ENCODE measurements at regions of chr15 and their contacts with region 1.

Region 1: DNA sequence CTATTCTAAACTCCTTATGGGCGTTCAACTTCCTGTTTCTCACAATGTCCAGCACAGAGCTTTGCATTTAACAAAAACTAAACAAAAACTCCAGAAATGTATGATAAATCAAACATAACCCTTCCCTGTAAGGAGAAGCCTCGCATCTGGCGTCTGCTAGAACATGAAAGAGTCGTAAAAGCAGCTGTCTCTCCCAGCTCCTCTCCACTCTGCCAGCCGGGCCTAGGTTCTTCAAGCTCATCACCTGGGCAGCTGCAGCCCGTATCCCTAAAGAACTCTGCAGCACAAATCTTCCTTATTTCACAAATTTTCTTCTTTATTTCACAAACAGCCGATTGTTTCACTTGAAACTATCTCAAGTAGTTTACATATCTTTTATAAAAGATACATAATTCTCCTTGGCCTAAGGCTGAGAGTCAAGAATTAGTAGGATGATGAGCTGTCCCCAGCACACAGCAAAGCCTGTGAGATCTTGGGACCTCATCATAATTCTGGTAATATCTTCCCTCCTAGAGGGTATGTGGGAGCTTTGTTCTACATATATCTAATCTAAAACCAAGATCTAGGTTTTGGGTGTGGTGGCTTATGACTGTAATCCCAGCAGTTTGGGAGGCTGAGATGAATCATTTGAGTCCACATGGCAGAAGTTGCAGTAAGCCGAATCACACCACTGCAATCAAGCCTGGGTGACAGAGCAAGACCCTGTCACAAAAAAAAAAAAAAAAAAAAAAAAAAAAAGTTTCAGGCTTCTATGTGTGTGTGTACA is 35.3 kb downstream of the ANXA2 start:
- DNase-seq: no peak
- H3K4me3 ChIP-seq: no peak overlapping the region
- H3K27ac ChIP-seq: no peak overlapping the region
- H3K4me1 ChIP-seq: no peaks in the 10 kb centered on the region
- H3K27me3 ChIP-seq: peaks cover 0 to 1% (median 0%) of the 10 kb centered on the region in 4 experiments; a peak in 1 of 7 replicates
- CTCF ChIP-seq: no peak
- EP300 ChIP-seq: no peak
- POLR2A ChIP-seq: no peak
- RAD21 ChIP-seq: no peak

Region 2: GRCh38 chr15:60340207-60340921 is 22.1 kb before region 1 on chr15:
- CTCF ChIA-PET with region 1: interaction called, 18 read pairs
- POLR2A ChIA-PET with region 1: no interaction called
- DNase-seq: no peak
- H3K4me3 ChIP-seq: no peak overlapping the region
- H3K27ac ChIP-seq: no peak overlapping the region
- H3K4me1 ChIP-seq: peaks cover 3 to 7% (median 4%) of the 10 kb centered on the region in 4 experiments; a peak in 6 of 7 replicates
- H3K27me3 ChIP-seq: no peaks in the 10 kb centered on the region
- CTCF ChIP-seq: peak; percentile 20 to 35 (median 31)
- EP300 ChIP-seq: no peak
- POLR2A ChIP-seq: no peak
- RAD21 ChIP-seq: peak; percentile 21 to 45; a peak in 3 of 4 replicates

Region 3: GRCh38 chr15:60374628-60375081 is 12.2 kb after region 1 on chr15:
- CTCF ChIA-PET with region 1: interaction called, 38 read pairs
- POLR2A ChIA-PET with region 1: interaction called, 4 read pairs
- DNase-seq: no peak
- H3K4me3 ChIP-seq: no peak overlapping the region
- H3K27ac ChIP-seq: no peak overlapping the region; the same call in 1 of the 2 replicates
- H3K4me1 ChIP-seq: peaks cover 2 to 8% (median 5%) of the 10 kb centered on the region in 4 experiments; a peak in 6 of 7 replicates
- H3K27me3 ChIP-seq: no peaks in the 10 kb centered on the region
- CTCF ChIP-seq: no peak
- EP300 ChIP-seq: no peak
- POLR2A ChIP-seq: no peak
- RAD21 ChIP-seq: no peak; a peak in 1 of 4 replicates

Region 4: GRCh38 chr15:60397772-60398445 is 35.4 kb after region 1 on chr15 and contains the start of gene ANXA2:
- CTCF ChIA-PET with region 1: interaction called, 10 read pairs
- POLR2A ChIA-PET with region 1: interaction called, 5 read pairs
- DNase-seq: peak in 1 of 2 experiments; percentile 79
- H3K4me3 ChIP-seq: peak within 1 kb of the TSS; percentile 58 to 80 (median 72)
- H3K27ac ChIP-seq: peak within 1 kb of the TSS; percentile 50
- H3K4me1 ChIP-seq: peaks cover 4 to 18% (median 16%) of the 10 kb centered on the region in 4 experiments
- H3K27me3 ChIP-seq: peaks cover 0 to 12% (median 6%) of the 10 kb centered on the region in 4 experiments; a peak in 6 of 7 replicates
- CTCF ChIP-seq: no peak
- EP300 ChIP-seq: no peak
- POLR2A ChIP-seq: peak in 1 of 2 experiments; percentile 44; a peak in 2 of 3 replicates
- RAD21 ChIP-seq: no peak
- total RNA-seq, gene ANXA2: 214 and 217 TPM in 2 replicates

Region 5: DNA sequence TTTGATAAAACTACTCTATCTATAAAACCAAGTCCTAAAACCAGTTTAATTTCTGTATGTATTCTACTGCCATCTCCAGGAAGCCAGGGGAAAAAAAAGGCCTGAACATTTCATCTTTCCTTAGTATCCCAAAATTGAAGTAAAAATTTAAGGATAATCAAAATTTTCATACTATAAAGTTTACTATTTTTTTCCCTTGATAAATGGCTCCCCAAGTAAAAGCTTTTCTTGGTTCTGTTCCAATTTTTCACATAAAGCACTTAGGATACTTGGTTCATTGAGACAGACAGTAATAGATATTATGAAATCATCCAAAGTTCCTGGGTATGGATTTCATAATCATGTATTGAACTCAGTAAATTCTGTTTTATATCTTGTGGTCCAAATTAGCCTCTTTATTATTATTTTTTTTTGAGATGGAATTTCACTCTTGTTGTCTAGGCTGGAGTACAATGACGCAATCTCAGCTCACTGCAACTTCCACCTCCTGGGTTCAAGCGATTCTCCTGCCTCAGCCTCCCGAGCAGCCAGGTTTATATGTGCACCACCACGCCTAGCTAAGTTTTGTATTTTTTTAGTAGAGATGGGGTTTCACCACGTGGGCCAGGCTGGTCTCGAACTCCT is 81.9 kb after region 1 on chr15:
- CTCF ChIA-PET with region 1: interaction called, 73 read pairs
- POLR2A ChIA-PET with region 1: no interaction called
- DNase-seq: no peak
- H3K4me3 ChIP-seq: no peak overlapping the region
- H3K27ac ChIP-seq: no peak overlapping the region
- H3K4me1 ChIP-seq: no peaks in the 10 kb centered on the region
- H3K27me3 ChIP-seq: no peaks in the 10 kb centered on the region
- CTCF ChIP-seq: peak in 1 of 3 experiments; percentile 1; a peak in 2 of 4 replicates
- EP300 ChIP-seq: no peak
- POLR2A ChIP-seq: no peak
- RAD21 ChIP-seq: no peak; a peak in 1 of 4 replicates

Region 6: GRCh38 chr15:60507596-60508424 is 145.3 kb after region 1 on chr15:
- CTCF ChIA-PET with region 1: interaction called, 30 read pairs
- POLR2A ChIA-PET with region 1: interaction called, 3 read pairs
- DNase-seq: peak in 1 of 2 experiments; percentile 54
- H3K4me3 ChIP-seq: no peak overlapping the region
- H3K27ac ChIP-seq: no peak overlapping the region
- H3K4me1 ChIP-seq: peaks cover 0 to 3% (median 0%) of the 10 kb centered on the region in 4 experiments; a peak in 2 of 7 replicates
- H3K27me3 ChIP-seq: no peaks in the 10 kb centered on the region; a peak in 1 of 7 replicates
- CTCF ChIP-seq: peak in 2 of 3 experiments; percentile 75 to 91; a peak in 3 of 4 replicates
- EP300 ChIP-seq: no peak
- POLR2A ChIP-seq: no peak
- RAD21 ChIP-seq: peak; percentile 86 to 88

Region 7: GRCh38 chr15:60520825-60521368 is 158.4 kb after region 1 on chr15:
- CTCF ChIA-PET with region 1: interaction called, 78 read pairs
- POLR2A ChIA-PET with region 1: no interaction called
- DNase-seq: peak in 1 of 2 experiments; percentile 87
- H3K4me3 ChIP-seq: no peak overlapping the region
- H3K27ac ChIP-seq: no peak overlapping the region
- H3K4me1 ChIP-seq: peaks cover 0 to 3% (median 0%) of the 10 kb centered on the region in 4 experiments; a peak in 4 of 7 replicates
- H3K27me3 ChIP-seq: no peaks in the 10 kb centered on the region
- CTCF ChIP-seq: peak in 2 of 3 experiments; percentile 74 to 86; a peak in 3 of 4 replicates
- EP300 ChIP-seq: no peak
- POLR2A ChIP-seq: no peak
- RAD21 ChIP-seq: peak; percentile 82 to 83

Measured in H1 (cell line).